ENCODE measurements at regions of chr18 and their contacts with region 1.

Region 1: GRCh38 chr18:65124633-65125032 is 626.2 kb upstream of the CDH7 start:
- DNase-seq: no peak
- ATAC-seq: no peak
- H3K4me3 ChIP-seq: no peak overlapping the region
- H3K27ac ChIP-seq: no peak overlapping the region
- H3K4me1 ChIP-seq: no peaks in the 10 kb centered on the region
- H3K27me3 ChIP-seq: no peaks in the 10 kb centered on the region
- CTCF ChIP-seq: no peak
- EP300 ChIP-seq: no peak
- POLR2A ChIP-seq: no peak
- RAD21 ChIP-seq: no peak

Region 2: GRCh38 chr18:64840911-64841701 is 283.5 kb before region 1 on chr18:
- CTCF ChIA-PET with region 1: no interaction called
- POLR2A ChIA-PET with region 1: no interaction called
- RAD21 ChIA-PET with region 1: no interaction called
- SMC1A ChIA-PET with region 1: no interaction called
- in situ Hi-C with region 1: no loop called
- intact Hi-C with region 1: no loop called
- DNase-seq: no peak
- ATAC-seq: no peak
- H3K4me3 ChIP-seq: no peak overlapping the region
- H3K27ac ChIP-seq: no peak overlapping the region
- H3K4me1 ChIP-seq: no peaks in the 10 kb centered on the region
- H3K27me3 ChIP-seq: no peaks in the 10 kb centered on the region
- CTCF ChIP-seq: no peak
- EP300 ChIP-seq: no peak
- POLR2A ChIP-seq: no peak
- RAD21 ChIP-seq: no peak

Region 3: DNA sequence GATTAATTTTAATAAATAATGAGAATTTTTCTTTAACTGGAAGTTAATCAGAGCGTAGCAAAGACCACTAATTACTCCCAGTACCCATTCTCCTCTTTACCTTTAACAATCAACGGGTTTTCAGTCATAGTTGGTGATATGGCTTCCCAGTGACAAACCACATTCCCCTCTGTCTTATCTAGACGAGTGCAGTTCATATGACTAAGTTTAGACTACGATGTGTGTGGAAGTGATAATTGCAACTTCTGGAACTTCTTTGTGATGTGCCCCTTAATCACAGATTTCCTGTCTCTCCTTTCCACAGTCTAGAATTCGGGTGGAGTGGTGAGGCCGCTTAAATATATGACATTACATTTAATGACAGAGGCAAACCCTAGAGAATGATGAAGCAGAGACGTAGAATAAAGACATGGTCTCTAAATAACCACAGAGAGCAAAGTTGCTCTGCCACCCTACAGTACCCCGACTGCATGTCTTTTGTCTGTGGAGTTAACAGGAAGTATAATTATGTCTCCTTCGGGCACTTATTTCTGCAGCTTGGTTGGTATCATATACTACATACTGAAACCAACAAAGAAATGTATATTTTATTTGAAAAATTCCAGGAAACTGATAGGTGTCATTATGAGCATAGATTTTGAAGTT is 67.1 kb before region 1 on chr18:
- CTCF ChIA-PET with region 1: no interaction called
- POLR2A ChIA-PET with region 1: no interaction called
- RAD21 ChIA-PET with region 1: no interaction called
- SMC1A ChIA-PET with region 1: no interaction called
- in situ Hi-C with region 1: no loop called
- intact Hi-C with region 1: loop called (anchors 10 kb)
- DNase-seq: no peak
- ATAC-seq: peak; percentile 24
- H3K4me3 ChIP-seq: no peak overlapping the region
- H3K27ac ChIP-seq: no peak overlapping the region
- H3K4me1 ChIP-seq: no peaks in the 10 kb centered on the region
- H3K27me3 ChIP-seq: no peaks in the 10 kb centered on the region
- CTCF ChIP-seq: no peak
- EP300 ChIP-seq: no peak
- POLR2A ChIP-seq: no peak
- RAD21 ChIP-seq: no peak